ENCODE measurements at regions of chr3 and their contacts with region 1.

Region 1: GRCh38 chr3:187738331-187739093 is 6.8 kb downstream of the BCL6 start:
- DNase-seq: peak; percentile 69
- H3K4me3 Mint-ChIP-seq: peak overlapping the region; percentile 94
- H3K27ac Mint-ChIP-seq: peak overlapping the region; percentile 70
- H3K4me1 Mint-ChIP-seq: peaks cover 38% of the 10 kb centered on the region
- H3K27me3 Mint-ChIP-seq: peaks cover 12% of the 10 kb centered on the region

Region 2: GRCh38 chr3:187974871-187975271 is 236.4 kb after region 1 on chr3:
- intact Hi-C with region 1: loop called (anchors 2 kb)
- DNase-seq: peak; percentile 20
- H3K4me3 Mint-ChIP-seq: peak overlapping the region; percentile 72
- H3K27ac Mint-ChIP-seq: peak overlapping the region; percentile 93
- H3K4me1 Mint-ChIP-seq: peaks cover 68% of the 10 kb centered on the region
- H3K27me3 Mint-ChIP-seq: no peaks in the 10 kb centered on the region

Region 3: GRCh38 chr3:188339410-188340295 is 601.1 kb after region 1 on chr3:
- intact Hi-C with region 1: loop called (anchors 1 kb)
- DNase-seq: peak; percentile 19
- H3K4me3 Mint-ChIP-seq: peak overlapping the region; percentile 66
- H3K27ac Mint-ChIP-seq: peak overlapping the region; percentile 89
- H3K4me1 Mint-ChIP-seq: peaks cover 29% of the 10 kb centered on the region
- H3K27me3 Mint-ChIP-seq: no peaks in the 10 kb centered on the region

Region 4: DNA sequence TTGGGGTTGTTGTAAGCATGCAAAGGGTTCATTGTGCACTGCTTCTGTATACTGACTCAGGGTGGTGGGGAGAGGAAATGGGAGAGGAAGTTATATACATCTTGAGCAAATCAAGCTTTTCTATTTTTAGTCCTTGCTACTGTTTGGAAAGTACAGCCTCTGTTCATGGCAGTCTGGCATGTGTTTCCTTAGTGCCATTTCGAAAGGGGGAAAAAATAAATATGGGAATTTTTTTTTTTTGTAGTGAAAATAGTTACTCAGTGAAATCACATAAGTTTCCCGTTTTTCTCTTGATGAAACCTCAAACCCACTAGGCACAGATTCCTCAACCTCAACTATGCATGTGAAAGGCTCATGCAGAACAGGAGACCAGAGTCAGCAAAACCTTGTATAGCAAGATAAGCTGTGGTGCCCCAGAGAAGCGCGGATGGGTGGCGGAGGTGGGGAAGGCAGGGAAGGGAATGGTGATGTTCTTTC is 768.8 kb after region 1 on chr3:
- intact Hi-C with region 1: loop called (anchors 5 kb)
- DNase-seq: no peak
- H3K4me3 Mint-ChIP-seq: no peak overlapping the region
- H3K27ac Mint-ChIP-seq: no peak overlapping the region
- H3K4me1 Mint-ChIP-seq: peaks cover 13% of the 10 kb centered on the region
- H3K27me3 Mint-ChIP-seq: no peaks in the 10 kb centered on the region

Region 5: DNA sequence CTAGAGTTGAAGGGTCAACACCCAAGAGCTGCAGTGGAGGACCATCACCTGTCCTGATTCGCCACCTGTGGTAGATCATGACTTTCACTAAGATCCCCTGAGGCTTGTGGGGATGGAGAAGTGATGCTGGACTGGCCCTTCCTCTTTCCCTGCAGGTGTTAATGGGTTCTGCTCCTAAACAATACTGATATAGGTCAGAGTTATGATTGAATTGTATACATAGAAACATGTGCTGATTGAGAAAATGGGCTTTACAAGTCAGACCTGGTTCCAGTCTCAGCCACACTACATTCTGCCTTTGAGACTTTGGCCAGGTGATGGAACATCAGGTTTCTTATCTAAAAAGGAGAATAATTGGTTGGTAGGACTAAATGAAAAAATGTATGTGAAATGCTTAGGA is 1014.3 kb after region 1 on chr3:
- intact Hi-C with region 1: loop called (anchors 2 kb)
- DNase-seq: no peak
- H3K4me3 Mint-ChIP-seq: no peak overlapping the region
- H3K27ac Mint-ChIP-seq: no peak overlapping the region
- H3K4me1 Mint-ChIP-seq: peaks cover 19% of the 10 kb centered on the region
- H3K27me3 Mint-ChIP-seq: peaks cover 3% of the 10 kb centered on the region

Region 6: GRCh38 chr3:189041482-189042090 is 1303.1 kb after region 1 on chr3:
- intact Hi-C with region 1: loop called (anchors 1 kb)
- DNase-seq: peak; percentile 76
- H3K4me3 Mint-ChIP-seq: no peak overlapping the region
- H3K27ac Mint-ChIP-seq: peak overlapping the region; percentile 25
- H3K4me1 Mint-ChIP-seq: peaks cover 51% of the 10 kb centered on the region
- H3K27me3 Mint-ChIP-seq: no peaks in the 10 kb centered on the region

Region 7: DNA sequence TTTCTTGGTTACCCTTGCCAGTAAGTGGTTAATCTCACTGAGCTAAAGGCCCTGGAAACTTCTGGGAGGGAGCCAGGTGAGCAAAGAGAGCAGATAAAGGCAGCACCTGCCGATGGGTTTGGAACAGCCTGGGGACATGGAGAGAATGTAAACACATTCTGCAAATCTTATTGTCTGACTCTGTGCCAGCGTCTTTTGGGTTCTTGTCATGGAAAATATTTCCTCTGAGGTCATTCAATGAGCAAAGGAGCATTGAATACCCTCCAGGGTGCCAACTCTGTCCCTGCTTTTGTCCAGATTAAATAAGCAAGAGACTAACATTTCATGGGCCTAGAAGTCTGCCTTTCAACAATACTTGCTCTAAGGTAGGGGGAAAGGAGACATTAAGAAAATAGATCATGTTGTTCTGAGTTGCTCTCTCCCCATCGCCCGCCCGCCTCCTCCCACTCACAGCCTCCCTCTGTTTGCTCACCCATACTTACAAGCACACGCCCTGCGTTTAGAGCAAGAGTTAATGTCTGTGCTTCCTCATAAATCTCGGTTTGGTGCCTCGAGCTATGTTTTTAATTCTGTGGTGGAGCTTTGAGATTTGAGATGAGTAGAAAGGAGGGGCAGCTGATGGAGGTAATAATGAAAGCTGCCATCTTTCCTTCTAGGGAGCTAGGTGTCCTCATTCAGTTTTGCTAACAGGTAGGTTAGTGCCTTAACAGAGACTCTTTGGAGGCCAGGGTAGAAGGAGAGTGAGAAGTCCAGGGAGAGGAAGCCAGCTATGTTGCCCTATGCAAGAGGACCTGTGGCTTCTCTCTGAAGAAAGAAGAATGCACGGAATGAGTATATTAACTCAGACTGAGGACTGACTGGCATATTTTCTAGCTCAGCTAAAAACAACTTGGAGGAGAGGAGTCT is 1566.2 kb after region 1 on chr3:
- intact Hi-C with region 1: loop called (anchors 5 kb)
- DNase-seq: no peak
- H3K4me3 Mint-ChIP-seq: peak overlapping the region; percentile 71
- H3K27ac Mint-ChIP-seq: peak overlapping the region; percentile 98
- H3K4me1 Mint-ChIP-seq: peaks cover 75% of the 10 kb centered on the region
- H3K27me3 Mint-ChIP-seq: no peaks in the 10 kb centered on the region